PC-3 (cell line): ENCODE measurements at regions of chr4 and their contacts with region 1.

Region 1: DNA sequence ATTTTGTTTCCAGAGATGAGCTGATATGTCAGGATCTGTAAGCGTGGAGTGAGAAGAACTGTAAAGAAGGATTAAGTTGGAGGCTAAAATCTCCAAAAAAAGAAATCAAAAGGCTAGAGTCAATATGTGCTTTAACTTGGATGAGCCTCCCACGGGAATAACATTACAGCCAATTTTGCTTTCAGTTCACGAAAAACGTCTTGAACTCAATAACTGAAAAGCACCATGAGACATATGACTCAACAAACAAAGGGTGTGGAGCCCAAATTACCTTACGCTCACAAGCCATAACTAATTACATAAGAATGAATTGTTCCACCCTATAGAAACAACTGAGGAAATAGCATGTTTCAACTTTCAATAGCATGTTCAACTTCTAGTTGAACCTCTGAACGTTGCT is 22.3 kb downstream of the TMPRSS11D start:
- DNase-seq: no peak
- ATAC-seq: no peak
- H3K4me3 ChIP-seq: no peak overlapping the region
- H3K27ac ChIP-seq: no peak overlapping the region
- H3K4me1 ChIP-seq: no peaks in the 10 kb centered on the region
- H3K27me3 ChIP-seq: no peaks in the 10 kb centered on the region
- CTCF ChIP-seq: no peak

Region 2: GRCh38 chr4:67809502-67809901 is 52.0 kb before region 1 on chr4:
- CTCF ChIA-PET with region 1: no interaction called
- POLR2A ChIA-PET with region 1: no interaction called
- intact Hi-C with region 1: loop called (anchors 10 kb)
- DNase-seq: no peak
- ATAC-seq: no peak
- H3K4me3 ChIP-seq: no peak overlapping the region
- H3K27ac ChIP-seq: no peak overlapping the region
- H3K4me1 ChIP-seq: no peaks in the 10 kb centered on the region
- H3K27me3 ChIP-seq: no peaks in the 10 kb centered on the region
- CTCF ChIP-seq: no peak